SK-N-SH (cell line): ENCODE measurements at regions of chr14 and their contacts with region 1.

Region 1: GRCh38 chr14:105490572-105491366 is at the start of gene TEDC1:
- DNase-seq: peak; percentile 95
- H3K4me3 ChIP-seq: peak within 1 kb of the TSS; percentile 70 to 82
- H3K27ac ChIP-seq: peak within 1 kb of the TSS; percentile 82 to 91
- H3K4me1 ChIP-seq: peaks cover 5 to 27% of the 10 kb centered on the region in 2 experiments; a peak in 2 of 4 replicates
- H3K27me3 ChIP-seq: no peaks in the 10 kb centered on the region
- CTCF ChIP-seq: peak; percentile 63
- EP300 ChIP-seq: no peak
- RAD21 ChIP-seq: peak; percentile 73
- polyA plus RNA-seq, gene TEDC1: 10.9 and 13.4 TPM in 2 replicates

Region 2: GRCh38 chr14:105389976-105390848 is 100.6 kb before region 1 on chr14:
- CTCF ChIA-PET with region 1: interaction called, 14 read pairs
- POLR2A ChIA-PET with region 1: no interaction called
- DNase-seq: no peak
- H3K4me3 ChIP-seq: no peak overlapping the region
- H3K27ac ChIP-seq: peak overlapping the region in 1 of 2 experiments; percentile 16; a peak in 1 of 4 replicates
- H3K4me1 ChIP-seq: peaks cover 0 to 7% of the 10 kb centered on the region in 2 experiments; a peak in 1 of 4 replicates
- H3K27me3 ChIP-seq: no peaks in the 10 kb centered on the region
- CTCF ChIP-seq: no peak
- EP300 ChIP-seq: no peak
- RAD21 ChIP-seq: no peak

Region 3: DNA sequence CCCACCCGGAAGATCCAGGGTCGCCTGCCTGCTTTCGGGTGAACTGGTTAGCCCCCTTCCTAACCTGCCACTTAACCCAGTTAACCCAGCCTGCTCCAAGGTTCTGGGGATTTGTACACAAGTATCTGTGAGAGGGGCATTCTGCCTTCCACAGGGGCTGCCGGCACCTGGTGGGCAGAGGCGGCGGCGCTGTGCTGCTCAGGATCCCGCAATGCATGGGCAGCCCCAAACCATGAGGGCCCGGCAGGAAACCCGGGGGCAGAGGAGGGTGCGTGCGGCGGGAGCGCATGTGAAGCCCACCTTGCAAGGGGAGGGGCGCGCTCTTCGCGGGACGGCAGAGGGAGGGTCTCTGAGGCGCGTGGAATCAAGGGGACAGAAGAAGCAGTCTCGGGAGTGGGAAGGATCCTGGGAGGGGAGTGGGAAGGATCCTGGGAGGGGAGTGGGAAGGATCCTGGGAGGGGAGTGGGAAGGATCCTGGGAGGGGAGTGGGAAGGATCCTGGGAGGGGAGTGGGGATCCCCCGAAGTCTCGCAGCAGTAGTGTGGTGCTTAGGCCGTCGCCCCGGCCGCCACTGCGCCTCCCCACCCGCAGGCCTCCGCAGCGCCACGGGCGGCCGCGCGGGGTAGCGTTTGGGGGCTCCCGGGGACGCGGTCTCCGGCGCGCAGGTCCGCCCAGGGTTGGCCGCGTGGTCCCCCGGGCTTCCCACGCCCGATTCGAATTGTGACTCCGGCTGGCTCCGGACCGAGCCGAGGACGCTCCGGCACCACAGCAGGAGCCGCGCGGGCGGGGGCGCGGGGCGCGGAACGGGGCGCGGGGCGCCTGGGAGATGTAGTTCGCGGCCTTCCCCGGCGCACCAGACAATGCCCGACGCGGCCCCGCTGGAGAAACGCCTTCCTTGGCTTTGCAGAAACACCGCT is 76.1 kb before region 1 on chr14:
- CTCF ChIA-PET with region 1: interaction called, 13 read pairs
- POLR2A ChIA-PET with region 1: no interaction called
- DNase-seq: peak; percentile 94
- H3K4me3 ChIP-seq: peak overlapping the region; percentile 51 to 61
- H3K27ac ChIP-seq: peak overlapping the region in 1 of 2 experiments; percentile 62; a peak in 2 of 4 replicates
- H3K4me1 ChIP-seq: peaks cover 4 to 29% of the 10 kb centered on the region in 2 experiments; a peak in 1 of 4 replicates
- H3K27me3 ChIP-seq: no peaks in the 10 kb centered on the region
- CTCF ChIP-seq: peak; percentile 63
- EP300 ChIP-seq: no peak
- RAD21 ChIP-seq: no peak

Region 4: DNA sequence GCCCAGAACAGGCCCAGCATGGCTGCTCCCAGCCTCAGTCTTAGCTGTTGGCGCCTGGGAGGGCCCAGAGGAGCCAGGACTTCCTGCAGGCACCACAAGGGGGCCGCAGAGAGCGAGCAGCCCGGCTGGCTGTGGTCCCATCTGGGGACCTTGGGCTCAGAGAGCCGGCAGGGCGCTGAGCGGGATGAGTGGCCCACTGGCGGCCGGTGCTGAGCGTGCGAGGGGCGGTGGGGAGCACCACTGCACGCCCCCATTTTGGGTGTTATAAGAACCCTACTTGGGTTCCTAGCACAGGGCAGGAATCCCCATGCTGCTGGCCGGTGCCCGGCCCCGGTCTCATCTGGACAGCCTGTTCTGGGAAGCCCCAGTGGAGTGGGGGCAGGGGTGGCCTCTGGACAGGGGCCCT is 42.1 kb before region 1 on chr14:
- CTCF ChIA-PET with region 1: interaction called, 28 read pairs
- POLR2A ChIA-PET with region 1: interaction called, 3 read pairs
- DNase-seq: peak; percentile 96
- H3K4me3 ChIP-seq: peak overlapping the region in 1 of 2 experiments; percentile 32; a peak in 1 of 4 replicates
- H3K27ac ChIP-seq: no peak overlapping the region; a peak in 2 of 4 replicates
- H3K4me1 ChIP-seq: peaks cover 0 to 23% of the 10 kb centered on the region in 2 experiments; a peak in 1 of 4 replicates
- H3K27me3 ChIP-seq: no peaks in the 10 kb centered on the region
- CTCF ChIP-seq: peak; percentile 75
- EP300 ChIP-seq: no peak
- RAD21 ChIP-seq: peak; percentile 69

Region 5: DNA sequence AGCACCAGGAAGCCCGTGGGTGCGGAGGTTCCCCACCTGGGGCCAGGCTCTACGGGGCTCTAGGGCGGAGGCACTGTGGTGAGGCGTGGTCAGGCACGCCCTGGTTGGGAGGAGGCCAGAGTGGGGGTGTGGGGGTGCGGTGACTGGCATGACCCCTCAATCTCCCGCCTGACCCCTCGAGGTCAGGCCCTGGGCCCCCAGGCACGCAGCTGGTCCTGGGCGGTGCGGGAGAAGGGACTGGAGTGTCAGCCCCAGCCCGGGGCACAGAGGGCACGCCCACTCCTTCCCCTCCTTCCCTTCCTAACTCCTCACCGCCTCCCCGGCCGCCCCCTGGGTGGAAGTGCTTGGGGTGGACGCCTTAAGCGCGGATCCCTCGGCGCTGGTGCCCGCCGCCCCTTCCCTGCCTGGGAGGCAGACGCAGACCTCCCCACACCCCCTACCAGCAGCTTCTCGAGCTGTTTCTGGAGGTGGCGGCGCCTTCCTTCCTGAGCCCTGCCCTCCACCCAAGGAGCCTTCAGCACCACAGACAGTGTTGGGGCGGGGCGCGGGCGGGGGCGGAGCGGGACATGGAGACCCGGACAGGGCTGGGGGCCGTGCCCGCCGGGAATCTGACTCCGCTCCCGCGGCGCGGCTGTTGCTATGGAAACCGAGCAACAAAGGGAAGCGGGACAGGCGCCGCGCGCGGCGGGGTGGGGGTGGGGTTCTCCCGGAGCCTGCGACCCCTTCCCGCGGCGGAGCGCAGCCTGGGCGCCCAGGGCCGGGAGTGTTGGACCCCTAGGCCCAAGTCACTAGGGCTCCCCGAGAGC is 16.9 kb before region 1 on chr14:
- CTCF ChIA-PET with region 1: interaction called, 137 read pairs
- POLR2A ChIA-PET with region 1: interaction called, 10 read pairs
- DNase-seq: peak; percentile 85
- H3K4me3 ChIP-seq: peak overlapping the region; percentile 52 to 92
- H3K27ac ChIP-seq: peak overlapping the region; percentile 81 to 99
- H3K4me1 ChIP-seq: peaks cover 18 to 63% of the 10 kb centered on the region in 2 experiments; a peak in 3 of 4 replicates
- H3K27me3 ChIP-seq: no peaks in the 10 kb centered on the region
- CTCF ChIP-seq: no peak
- EP300 ChIP-seq: no peak
- RAD21 ChIP-seq: no peak

Region 6: GRCh38 chr14:105537369-105538164 is 46.8 kb after region 1 on chr14:
- CTCF ChIA-PET with region 1: interaction called, 10 read pairs
- POLR2A ChIA-PET with region 1: no interaction called
- DNase-seq: peak; percentile 95
- H3K4me3 ChIP-seq: no peak overlapping the region; a peak in 1 of 4 replicates
- H3K27ac ChIP-seq: no peak overlapping the region
- H3K4me1 ChIP-seq: no peaks in the 10 kb centered on the region; a peak in 1 of 4 replicates
- H3K27me3 ChIP-seq: peaks cover 5% of the 10 kb centered on the region; the same call in 1 of the 2 replicates
- CTCF ChIP-seq: peak; percentile 83
- EP300 ChIP-seq: no peak
- RAD21 ChIP-seq: peak; percentile 52